Activated CD4-positive, alpha-beta T cell treated with anti-CD3 and anti-CD28 coated beads, Interleukin-2, amount 10 ng/mL, durations not matched to agents 24 days and 14 days (primary cell): ENCODE measurements at regions of chr22 and their contacts with region 1.

Region 1: DNA sequence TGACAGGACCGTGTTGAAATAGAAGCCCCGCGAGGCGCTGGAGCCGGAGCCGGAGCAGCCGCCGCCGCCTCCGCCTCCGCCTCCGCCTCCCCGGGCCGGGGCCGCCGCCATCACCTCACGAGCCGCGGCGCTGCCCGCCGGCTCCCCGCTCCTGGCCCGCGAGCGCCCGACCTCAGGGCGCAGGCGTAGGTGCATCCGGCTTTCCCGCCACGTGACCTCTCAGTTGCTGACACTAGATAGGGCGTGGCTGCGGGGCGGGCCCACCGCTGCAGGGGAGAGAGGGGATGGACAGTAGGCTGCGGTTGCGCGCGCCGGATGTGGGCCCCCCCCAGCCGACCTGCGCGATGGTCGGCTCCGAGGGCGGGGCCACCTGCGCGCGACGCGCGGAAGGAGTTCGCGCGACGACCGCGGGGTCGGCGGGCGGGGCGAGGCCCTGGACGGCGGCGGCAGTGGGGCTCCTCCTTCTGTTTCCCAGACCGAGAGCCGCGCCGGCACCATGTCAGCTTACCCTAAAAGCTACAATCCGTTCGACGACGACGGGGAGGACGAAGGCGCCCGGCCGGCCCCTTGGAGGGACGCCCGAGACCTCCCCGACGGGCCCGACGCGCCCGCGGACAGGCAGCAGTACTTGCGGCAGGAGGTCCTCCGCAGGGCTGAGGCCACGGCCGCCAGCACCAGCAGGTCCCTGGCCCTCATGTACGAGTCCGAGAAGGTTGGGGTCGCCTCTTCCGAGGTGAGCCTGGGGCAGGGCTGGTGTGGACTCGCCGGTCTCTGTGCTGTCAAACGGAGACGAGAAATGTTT is at the starts of genes PI4KA and SNAP29:
- DNase-seq: peak; percentile 99
- H3K4me3 Mint-ChIP-seq: peak within 1 kb of the TSS; percentile 87
- H3K27ac Mint-ChIP-seq: peak within 1 kb of the TSS; percentile 84
- H3K4me1 Mint-ChIP-seq: peaks cover 36% of the 10 kb centered on the region
- H3K27me3 Mint-ChIP-seq: no peaks in the 10 kb centered on the region
- total RNA-seq, gene PI4KA: 78.4 and 83.8 TPM in 2 replicates
- total RNA-seq, gene SNAP29: 24.3 and 25.8 TPM in 2 replicates

Region 2: DNA sequence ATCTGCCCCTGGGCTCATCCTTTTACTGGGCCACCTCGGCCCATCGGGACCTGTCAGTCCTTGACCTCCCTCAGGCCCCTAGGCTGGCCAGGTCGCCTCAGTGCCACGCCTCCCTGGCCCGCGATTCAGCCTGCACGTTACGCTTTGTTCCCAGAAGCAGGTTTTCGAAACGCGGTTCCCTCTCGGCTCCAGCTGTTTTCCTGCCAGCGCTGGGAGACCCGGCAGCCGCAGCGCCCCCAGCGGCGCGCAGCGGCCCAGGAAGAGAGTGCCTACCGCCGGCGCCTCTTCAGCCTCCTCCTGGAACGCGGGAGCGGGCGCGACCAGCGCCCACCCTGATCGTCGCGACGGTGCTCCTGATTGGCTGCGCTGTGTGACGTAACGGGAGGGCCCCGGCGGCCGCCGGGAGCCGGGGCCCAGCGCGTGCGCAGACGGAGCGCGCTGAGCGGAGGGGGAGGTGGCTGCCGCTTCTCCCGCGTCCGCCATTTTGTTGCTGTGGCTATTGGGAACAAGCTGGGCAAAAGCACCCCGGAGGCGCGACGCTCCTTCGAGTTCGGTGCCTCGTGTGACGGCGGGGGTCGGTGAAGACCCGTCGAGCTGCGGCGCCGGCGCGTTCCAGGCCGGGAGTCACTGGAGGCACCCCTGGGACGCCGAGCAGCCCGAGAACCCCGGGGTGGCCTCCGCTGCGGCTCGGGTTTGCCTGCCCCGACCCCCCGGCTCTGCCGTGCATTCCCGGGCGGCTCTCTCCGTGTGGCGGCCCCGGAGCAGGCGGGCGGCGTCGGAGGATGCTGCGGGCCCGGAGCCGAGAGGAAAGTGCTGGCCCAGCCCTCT is 58.4 kb after region 1 on chr22 and contains the start of gene CRKL:
- intact Hi-C with region 1: loop called (anchors 1 kb)
- DNase-seq: peak; percentile 99
- H3K4me3 Mint-ChIP-seq: peak within 1 kb of the TSS; percentile 94
- H3K27ac Mint-ChIP-seq: peak within 1 kb of the TSS; percentile 90
- H3K4me1 Mint-ChIP-seq: peaks cover 27% of the 10 kb centered on the region
- H3K27me3 Mint-ChIP-seq: no peaks in the 10 kb centered on the region
- total RNA-seq, gene CRKL: 81.4 and 82.4 TPM in 2 replicates